ENCODE measurements at regions of chr9 and their contacts with region 1.

Region 1: DNA sequence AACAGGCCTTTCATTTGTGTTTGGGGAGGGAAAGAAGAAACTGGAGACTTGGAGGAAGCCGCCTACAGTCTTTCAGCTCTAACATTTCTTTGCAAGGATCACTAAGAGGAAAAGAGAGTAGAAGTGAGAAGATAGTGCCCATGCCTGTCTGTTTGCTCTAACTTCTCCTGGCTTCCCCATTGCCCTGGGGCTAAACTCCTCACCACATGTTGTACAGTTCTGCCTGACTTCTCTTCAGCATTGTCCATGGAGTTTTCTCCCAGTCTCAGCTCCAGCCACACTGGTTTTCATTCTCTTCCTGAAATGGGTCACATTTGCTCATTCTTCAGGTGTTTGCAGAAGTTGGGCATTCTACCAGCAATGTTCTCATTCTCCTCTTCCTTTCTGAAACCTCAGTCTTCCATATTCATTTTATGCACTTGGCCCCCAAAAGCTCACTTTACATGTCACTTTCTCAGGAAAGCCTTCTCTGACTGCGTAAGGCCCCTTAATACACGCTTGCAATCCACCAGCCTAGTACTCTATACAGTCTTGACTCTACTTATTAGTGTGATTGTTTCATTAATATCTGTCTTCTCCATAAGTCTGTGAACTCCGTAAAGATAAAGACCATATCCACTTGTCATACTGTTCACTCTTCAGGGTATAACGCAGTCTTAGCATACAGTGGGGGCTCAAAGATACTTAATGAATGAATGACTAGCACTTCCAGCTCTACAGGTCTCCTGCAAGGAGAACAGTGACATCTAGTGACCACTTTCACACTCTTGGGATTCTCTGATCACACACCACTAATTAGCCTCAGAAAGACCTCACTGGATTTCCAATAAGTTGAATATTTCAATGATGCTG is 40.2 kb upstream of the TRIM32 start:
- DNase-seq: no peak
- H3K4me3 ChIP-seq: no peak overlapping the region
- H3K27me3 ChIP-seq: no peaks in the 10 kb centered on the region
- CTCF ChIP-seq: peak; percentile 73

Region 2: GRCh38 chr9:116342071-116342470 is 304.8 kb before region 1 on chr9:
- CTCF ChIA-PET with region 1: no interaction called
- POLR2A ChIA-PET with region 1: no interaction called
- DNase-seq: no peak
- H3K4me3 ChIP-seq: no peak overlapping the region
- H3K27me3 ChIP-seq: no peaks in the 10 kb centered on the region
- CTCF ChIP-seq: no peak

Region 3: GRCh38 chr9:116549061-116549664 is 97.7 kb before region 1 on chr9:
- CTCF ChIA-PET with region 1: no interaction called
- POLR2A ChIA-PET with region 1: no interaction called
- DNase-seq: peak; percentile 84
- H3K4me3 ChIP-seq: no peak overlapping the region
- H3K27me3 ChIP-seq: no peaks in the 10 kb centered on the region
- CTCF ChIP-seq: no peak

Region 4: DNA sequence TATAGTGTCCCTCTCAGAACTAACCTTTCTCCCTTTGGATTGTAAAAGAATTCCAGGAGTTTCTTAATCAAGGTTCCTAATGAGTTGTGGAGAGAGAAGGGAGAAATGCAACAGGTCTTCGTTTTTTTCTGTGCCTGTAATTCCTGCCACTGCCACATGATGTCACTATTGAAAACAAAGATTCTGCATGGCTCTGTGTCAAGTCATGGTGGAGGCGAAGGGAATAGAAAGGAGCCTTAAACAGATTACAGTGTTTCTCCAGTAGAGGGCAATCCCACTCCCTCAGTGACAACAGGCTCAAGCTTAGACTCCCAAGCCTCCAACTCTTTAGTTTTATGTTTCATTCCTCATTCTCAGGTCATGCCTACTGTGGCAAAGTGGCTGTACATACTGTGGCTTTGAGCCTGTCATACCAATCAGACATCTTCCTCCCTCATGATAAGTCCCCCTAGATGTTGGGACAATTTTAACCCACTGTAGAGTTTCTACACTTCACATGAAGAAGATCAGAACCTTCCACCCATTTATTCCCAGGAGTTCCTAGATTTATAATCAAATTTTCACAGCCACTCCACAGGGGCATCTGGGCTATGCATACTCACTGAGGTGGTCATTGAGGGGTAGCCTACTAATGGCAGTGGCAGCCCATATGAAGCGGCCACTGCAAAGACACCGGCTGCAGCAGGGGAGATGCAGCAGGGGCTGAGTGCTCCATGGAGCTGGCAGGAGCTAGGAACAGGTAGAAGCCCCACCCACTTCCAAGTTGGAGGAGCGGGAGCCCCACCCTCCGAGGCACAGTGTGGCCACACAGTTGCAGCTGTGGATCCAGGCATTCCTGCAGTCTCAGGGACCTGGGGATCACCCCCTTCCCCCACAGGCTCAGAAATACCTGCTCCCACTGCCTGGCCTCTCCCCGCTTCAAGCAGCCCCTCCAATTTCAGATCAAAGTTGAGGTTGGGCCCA is 57.2 kb before region 1 on chr9:
- CTCF ChIA-PET with region 1: interaction called, 32 read pairs
- POLR2A ChIA-PET with region 1: no interaction called
- DNase-seq: no peak
- H3K4me3 ChIP-seq: no peak overlapping the region
- H3K27me3 ChIP-seq: no peaks in the 10 kb centered on the region
- CTCF ChIP-seq: peak; percentile 67

Region 5: GRCh38 chr9:116661037-116661954 is 14.4 kb after region 1 on chr9:
- CTCF ChIA-PET with region 1: interaction called, 12 read pairs
- POLR2A ChIA-PET with region 1: no interaction called
- DNase-seq: peak; percentile 35
- H3K4me3 ChIP-seq: no peak overlapping the region
- H3K27me3 ChIP-seq: no peaks in the 10 kb centered on the region
- CTCF ChIP-seq: peak; percentile 72